HCT116 (cell line): ENCODE measurements at regions of chr11 and their contacts with region 1.

Region 1: DNA sequence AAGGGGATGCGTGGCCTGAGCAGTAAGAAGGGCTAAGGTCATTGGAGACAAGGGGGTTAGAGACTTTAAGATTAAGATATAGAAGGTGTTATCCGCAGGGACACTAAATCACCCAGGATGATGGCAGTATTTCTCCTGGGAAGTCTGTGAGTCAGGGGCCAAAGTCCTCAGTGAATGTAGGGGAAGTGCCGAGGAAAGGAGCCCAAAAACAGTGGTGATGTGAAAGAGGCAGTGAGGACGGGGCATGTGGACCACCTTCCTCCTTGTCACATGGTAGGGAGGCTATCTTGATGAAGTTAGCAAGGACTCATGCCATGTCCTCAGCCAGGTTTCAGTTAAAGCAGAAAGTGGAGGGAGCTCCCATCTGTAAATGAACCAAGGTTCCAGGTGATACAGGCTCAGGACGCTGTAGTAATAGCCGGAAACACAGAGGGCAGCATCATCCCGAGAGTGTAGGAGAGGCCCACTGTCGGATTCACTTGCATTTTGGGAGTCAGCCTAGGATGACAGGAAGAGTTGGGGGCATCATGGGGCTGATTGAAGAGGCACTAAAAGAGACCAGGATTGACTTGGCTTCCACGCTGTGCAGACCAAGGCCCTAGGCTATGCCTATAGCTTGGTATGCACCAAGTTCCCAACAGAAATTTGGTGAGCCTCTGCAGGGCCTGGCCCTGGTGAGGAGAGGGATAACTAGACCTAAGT is 33.5 kb downstream of the WEE1 start:
- DNase-seq: peak; percentile 45
- ATAC-seq: peak; percentile 96
- H3K4me3 ChIP-seq: no peak overlapping the region
- H3K27ac ChIP-seq: no peak overlapping the region
- H3K4me1 ChIP-seq: peaks cover 13 to 32% of the 10 kb centered on the region in 2 experiments
- H3K27me3 ChIP-seq: no peaks in the 10 kb centered on the region
- CTCF ChIP-seq: peak; percentile 43 to 69 (median 51); a peak in 4 of 6 replicates
- POLR2A ChIP-seq: no peak
- RAD21 ChIP-seq: peak; percentile 61

Region 2: DNA sequence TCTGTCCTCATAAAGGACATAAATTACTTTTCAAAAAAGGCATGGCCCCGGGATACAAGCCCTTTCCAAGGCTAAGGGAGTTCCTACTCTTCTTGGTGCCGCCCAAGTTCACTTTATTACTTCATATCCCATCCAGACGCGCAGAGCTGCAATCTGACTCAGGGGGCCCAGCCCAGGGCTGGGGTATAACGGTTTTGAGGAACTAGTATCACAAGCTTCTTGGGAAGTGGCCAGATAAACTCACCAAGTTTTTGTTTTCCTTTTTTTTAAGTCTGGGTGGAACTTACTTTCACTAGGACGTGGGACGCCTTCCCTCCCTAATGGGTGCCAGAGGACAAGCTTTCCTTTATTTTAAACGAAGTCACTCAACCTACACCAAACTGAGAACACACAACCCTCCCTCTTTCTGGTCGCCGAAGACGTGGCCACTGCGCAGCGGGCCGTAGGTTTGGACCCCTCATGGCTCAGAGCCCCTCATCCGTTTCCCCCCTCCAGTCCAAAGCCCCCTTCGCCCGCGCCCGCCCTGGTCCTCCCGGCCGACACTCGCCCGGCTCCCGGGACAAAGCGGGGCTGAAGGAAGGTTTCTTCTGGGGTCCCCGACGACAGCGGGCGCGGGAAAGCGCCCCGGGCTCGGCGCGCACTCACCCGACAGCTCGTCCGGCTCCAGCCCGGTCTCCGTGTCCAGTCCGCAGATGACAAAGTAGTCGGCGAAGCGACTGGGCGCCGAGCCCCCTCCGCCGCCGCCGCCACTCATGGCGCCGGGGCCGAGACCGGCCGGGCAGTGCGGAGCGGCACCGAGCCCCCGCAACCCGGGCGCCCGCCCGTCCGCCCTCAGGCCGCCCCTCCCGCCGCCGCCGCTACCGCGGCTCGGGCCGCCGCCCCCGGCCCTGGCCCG is 342.4 kb before region 1 on chr11:
- CTCF ChIA-PET with region 1: no interaction called
- POLR2A ChIA-PET with region 1: no interaction called
- RAD21 ChIA-PET with region 1: no interaction called
- intact Hi-C with region 1: no loop called
- DNase-seq: no peak
- ATAC-seq: peak; percentile 61
- H3K4me3 ChIP-seq: peak overlapping the region; percentile 83 to 85
- H3K27ac ChIP-seq: peak overlapping the region; percentile 76
- H3K4me1 ChIP-seq: peaks cover 10 to 34% of the 10 kb centered on the region in 2 experiments
- H3K27me3 ChIP-seq: no peaks in the 10 kb centered on the region
- CTCF ChIP-seq: no peak
- POLR2A ChIP-seq: no peak
- RAD21 ChIP-seq: no peak

Region 3: DNA sequence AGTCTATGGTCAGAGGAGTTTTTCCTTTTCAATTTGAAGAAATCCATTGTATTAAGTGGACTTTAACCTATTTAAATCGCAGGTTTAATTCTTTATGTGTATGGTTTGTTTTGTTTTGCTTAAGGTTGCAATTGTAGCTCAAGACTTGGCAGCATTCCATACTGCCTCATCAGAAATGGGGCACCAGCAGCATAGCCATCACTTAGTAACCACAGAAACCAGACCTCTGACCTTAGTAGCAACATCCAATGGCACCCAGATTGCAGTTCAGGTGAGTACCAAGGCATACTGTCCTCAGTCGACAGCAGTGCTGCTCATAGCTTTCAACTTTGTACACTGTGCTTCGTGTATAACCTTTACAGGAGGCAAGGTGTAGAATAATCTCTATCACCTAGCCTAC is 81.8 kb before region 1 on chr11:
- CTCF ChIA-PET with region 1: no interaction called
- POLR2A ChIA-PET with region 1: no interaction called
- RAD21 ChIA-PET with region 1: no interaction called
- intact Hi-C with region 1: no loop called
- DNase-seq: no peak
- ATAC-seq: no peak
- H3K4me3 ChIP-seq: no peak overlapping the region
- H3K27ac ChIP-seq: no peak overlapping the region
- H3K4me1 ChIP-seq: peaks cover 21 to 25% of the 10 kb centered on the region in 2 experiments; a peak in 3 of 4 replicates
- H3K27me3 ChIP-seq: no peaks in the 10 kb centered on the region
- CTCF ChIP-seq: no peak
- POLR2A ChIP-seq: no peak
- RAD21 ChIP-seq: no peak

Region 4: GRCh38 chr11:9748361-9748970 is 141.5 kb after region 1 on chr11:
- CTCF ChIA-PET with region 1: interaction called, 10 read pairs
- POLR2A ChIA-PET with region 1: no interaction called
- RAD21 ChIA-PET with region 1: interaction called in 1 of 2 experiments, 5 read pairs
- intact Hi-C with region 1: no loop called
- DNase-seq: peak; percentile 70
- ATAC-seq: peak; percentile 98
- H3K4me3 ChIP-seq: no peak overlapping the region
- H3K27ac ChIP-seq: no peak overlapping the region
- H3K4me1 ChIP-seq: peaks cover 3 to 8% of the 10 kb centered on the region in 2 experiments; a peak in 3 of 4 replicates
- H3K27me3 ChIP-seq: no peaks in the 10 kb centered on the region
- CTCF ChIP-seq: peak; percentile 73 to 96 (median 79)
- POLR2A ChIP-seq: no peak
- RAD21 ChIP-seq: peak; percentile 92

Region 5: GRCh38 chr11:9757809-9758636 is 151.1 kb after region 1 on chr11:
- CTCF ChIA-PET with region 1: interaction called, 11 read pairs
- POLR2A ChIA-PET with region 1: no interaction called
- RAD21 ChIA-PET with region 1: no interaction called
- intact Hi-C with region 1: no loop called
- DNase-seq: peak; percentile 42
- ATAC-seq: peak; percentile 59
- H3K4me3 ChIP-seq: peak overlapping the region; percentile 71 to 74
- H3K27ac ChIP-seq: peak overlapping the region; percentile 95
- H3K4me1 ChIP-seq: peaks cover 17 to 34% of the 10 kb centered on the region in 2 experiments
- H3K27me3 ChIP-seq: no peaks in the 10 kb centered on the region
- CTCF ChIP-seq: peak in 2 of 3 experiments; percentile 55 to 66; a peak in 4 of 6 replicates
- POLR2A ChIP-seq: no peak
- RAD21 ChIP-seq: peak; percentile 65